ENCODE measurements at regions of chr7 and their contacts with region 1.

Region 1: DNA sequence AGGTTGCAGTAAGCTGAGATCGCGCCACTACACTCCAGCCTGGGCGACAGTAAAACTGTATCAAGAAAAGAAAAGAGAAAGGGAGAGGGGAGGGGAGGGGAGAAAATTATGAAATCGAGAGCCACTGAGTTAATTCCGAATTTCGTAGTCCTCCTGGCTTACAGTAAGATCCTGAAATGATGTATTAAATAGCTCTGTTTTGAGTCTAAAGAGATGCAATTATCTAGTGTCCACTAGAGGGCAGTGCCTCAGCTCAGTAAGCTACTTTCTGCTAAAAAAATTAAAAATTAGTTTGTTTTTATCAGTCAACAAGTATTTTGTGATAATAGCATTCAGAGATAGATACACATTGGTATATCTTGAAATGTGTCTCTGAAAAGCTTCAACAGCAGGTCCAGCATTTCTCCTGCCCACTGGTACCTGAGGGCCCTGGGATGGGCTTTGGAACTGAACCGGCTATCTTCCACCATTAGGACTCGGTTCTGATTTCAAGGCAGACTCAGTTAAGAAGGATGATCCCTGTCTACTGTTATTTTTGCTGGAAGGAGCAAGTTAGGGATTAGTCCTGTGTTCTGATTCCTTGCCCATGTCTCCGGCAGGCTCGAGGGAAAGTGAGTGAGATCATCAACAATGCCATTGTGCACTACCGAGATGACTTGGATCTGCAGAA is 19.5 kb downstream of the TSPAN33 start:
- DNase-seq: peak; percentile 65
- H3K4me3 Mint-ChIP-seq: no peak overlapping the region
- H3K27ac Mint-ChIP-seq: no peak overlapping the region
- H3K4me1 Mint-ChIP-seq: peaks cover 10% of the 10 kb centered on the region
- H3K27me3 Mint-ChIP-seq: peaks cover 5% of the 10 kb centered on the region

Region 2: DNA sequence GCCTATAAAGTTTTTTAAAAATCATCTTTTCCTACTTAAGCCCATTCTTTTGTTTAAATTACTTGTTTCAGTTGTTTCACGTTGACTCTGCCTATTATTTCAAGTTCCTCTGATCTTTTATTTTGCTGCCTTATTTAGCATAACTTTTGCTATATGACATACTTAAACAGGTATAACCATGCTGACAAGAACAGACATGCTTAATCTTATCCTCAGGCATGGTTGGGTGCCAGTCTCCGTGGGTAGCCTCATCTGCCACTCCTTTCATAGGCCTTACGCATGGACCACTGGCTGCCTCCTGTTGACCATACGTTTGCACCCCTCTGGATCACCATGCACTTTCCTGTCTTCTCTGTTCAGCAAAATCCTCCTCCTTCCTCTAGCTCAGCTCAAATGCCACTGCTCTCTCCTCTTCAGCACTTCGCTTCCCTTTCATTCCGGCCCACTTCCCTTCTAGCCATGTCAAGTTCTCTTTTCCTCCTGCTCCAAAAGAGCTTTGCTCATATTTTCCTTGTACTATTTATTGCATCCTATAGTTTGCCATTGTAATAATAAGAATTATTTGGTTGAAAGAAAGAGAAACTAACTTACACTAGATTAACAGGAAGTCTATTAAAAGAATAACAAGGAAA is 29.5 kb before region 1 on chr7:
- intact Hi-C with region 1: no loop called
- DNase-seq: no peak
- H3K4me3 Mint-ChIP-seq: no peak overlapping the region
- H3K27ac Mint-ChIP-seq: no peak overlapping the region
- H3K4me1 Mint-ChIP-seq: peaks cover 16% of the 10 kb centered on the region
- H3K27me3 Mint-ChIP-seq: peaks cover 3% of the 10 kb centered on the region

Region 3: DNA sequence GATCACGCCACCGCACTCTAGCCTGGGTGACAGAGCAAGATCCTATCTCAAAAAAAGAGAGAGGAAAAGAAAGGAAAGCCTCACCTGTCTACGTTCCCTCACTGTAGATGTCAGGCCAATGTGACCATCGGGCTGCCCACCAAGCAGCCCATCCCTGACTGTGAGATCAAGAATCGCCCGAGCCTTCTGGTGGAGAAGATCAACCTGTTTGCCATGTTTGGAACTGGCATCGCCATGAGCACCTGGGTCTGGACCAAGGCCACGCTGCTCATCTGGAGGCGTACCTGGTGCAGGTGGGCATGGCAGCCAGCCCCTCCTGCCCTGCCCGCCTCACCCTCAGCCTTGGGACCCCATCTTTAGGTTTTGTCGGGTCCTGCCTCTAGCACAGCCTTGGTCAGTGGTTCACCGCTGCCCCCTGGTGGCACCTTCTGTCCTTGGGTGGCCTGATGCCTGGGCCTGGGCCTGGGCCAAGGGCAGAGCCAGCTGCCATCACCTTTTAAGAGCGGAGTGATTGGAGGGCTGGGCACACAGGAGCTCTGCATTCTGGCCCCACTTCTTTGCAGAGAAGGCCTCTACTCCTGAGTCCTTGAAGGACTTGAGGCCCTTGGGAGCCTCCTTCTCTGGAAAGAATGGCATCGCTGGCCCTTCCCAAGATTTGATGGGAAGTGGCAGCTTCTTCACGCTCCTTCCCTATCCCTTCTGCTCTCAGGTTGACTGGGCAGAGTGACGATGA is 46.4 kb after region 1 on chr7:
- intact Hi-C with region 1: loop called (anchors 1 kb)
- DNase-seq: peak; percentile 90
- H3K4me3 Mint-ChIP-seq: no peak overlapping the region
- H3K27ac Mint-ChIP-seq: no peak overlapping the region
- H3K4me1 Mint-ChIP-seq: no peaks in the 10 kb centered on the region
- H3K27me3 Mint-ChIP-seq: peaks cover 6% of the 10 kb centered on the region

Measured in activated CD4-positive, alpha-beta T cell treated with anti-CD3 and anti-CD28 coated beads, Interleukin-2, amount 10 ng/mL, durations not matched to agents 24 days and 14 days (primary cell).